Activated CD4-positive, alpha-beta T cell treated with anti-CD3 and anti-CD28 coated beads for 36 hours (primary cell): ENCODE measurements at regions of chr16 and their contacts with region 1.

Region 1: GRCh38 chr16:50152807-50153452 is at the start of gene TENT4B:
- DNase-seq: peak; percentile 92
- ATAC-seq: peak; percentile 71
- H3K4me3 Mint-ChIP-seq: peak within 1 kb of the TSS; percentile 79
- H3K27ac Mint-ChIP-seq: peak within 1 kb of the TSS; percentile 98
- H3K4me1 Mint-ChIP-seq: peaks cover 39% of the 10 kb centered on the region
- H3K27me3 Mint-ChIP-seq: no peaks in the 10 kb centered on the region
- total RNA-seq, gene TENT4B: 19.3 to 22.4 TPM

Region 2: GRCh38 chr16:50024684-50025536 is 128.0 kb before region 1 on chr16 and contains the start of gene CNEP1R1:
- CTCF ChIA-PET with region 1: interaction called, 13 read pairs
- POLR2A ChIA-PET with region 1: interaction called, 4 read pairs
- intact Hi-C with region 1: loop called (anchors 1 to 2 kb)
- DNase-seq: peak; percentile 95
- ATAC-seq: peak; percentile 97
- H3K4me3 Mint-ChIP-seq: peak within 1 kb of the TSS; percentile 96
- H3K27ac Mint-ChIP-seq: peak within 1 kb of the TSS; percentile 85
- H3K4me1 Mint-ChIP-seq: peaks cover 23% of the 10 kb centered on the region
- H3K27me3 Mint-ChIP-seq: no peaks in the 10 kb centered on the region
- total RNA-seq, gene CNEP1R1: 19.3 to 22.8 TPM

Region 3: DNA sequence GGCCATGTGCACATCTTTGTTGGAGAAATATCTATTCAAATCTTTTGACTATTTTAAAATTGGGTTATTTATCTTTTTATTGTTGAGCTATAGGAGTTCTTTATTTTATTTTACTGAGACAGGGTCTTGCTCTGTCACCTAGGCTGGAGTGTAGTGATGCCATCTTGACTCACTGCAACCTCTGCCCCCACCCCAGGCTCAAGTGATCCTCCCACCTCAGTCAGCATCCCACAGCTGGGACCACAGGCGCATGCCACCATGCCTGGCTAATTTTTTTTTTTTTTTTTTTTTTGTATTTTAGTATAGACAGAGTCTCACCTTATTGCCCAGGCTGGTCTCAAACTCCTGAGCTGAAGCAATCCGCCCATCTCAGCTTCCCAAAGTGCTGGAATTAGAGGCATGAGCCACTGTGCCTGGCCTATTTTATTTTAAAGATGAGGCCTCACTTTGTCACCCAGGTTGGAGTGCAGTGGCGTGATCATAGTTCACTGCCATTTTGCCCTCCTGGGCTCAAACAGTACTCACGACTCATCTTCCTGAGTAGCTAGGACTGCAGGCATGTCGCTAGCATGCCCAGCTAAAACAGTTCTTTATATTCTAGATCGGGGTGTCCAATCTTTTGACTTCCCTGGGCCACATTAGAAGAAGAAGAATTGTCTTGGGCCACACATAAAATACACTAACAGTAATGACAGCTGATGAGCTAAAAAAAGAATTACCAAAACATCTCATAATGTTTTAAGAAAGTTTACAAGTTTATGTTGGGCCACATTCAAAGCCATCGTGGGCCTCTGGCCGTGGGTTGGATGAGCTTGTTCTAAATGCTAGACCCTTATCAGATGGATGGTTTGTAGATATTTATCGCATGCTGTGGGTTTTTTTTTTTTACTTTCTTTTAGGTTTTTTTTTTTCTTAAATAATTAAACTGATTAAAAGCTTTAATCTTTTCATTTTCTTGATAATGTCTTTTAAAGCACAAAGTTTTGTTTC is 13.9 kb after region 1 on chr16:
- CTCF ChIA-PET with region 1: interaction called, 8 read pairs
- POLR2A ChIA-PET with region 1: no interaction called
- intact Hi-C with region 1: loop called (anchors 2 kb)
- DNase-seq: peak; percentile 62
- ATAC-seq: peak; percentile 89
- H3K4me3 Mint-ChIP-seq: peak overlapping the region; percentile 59
- H3K27ac Mint-ChIP-seq: peak overlapping the region; percentile 87
- H3K4me1 Mint-ChIP-seq: peaks cover 55% of the 10 kb centered on the region
- H3K27me3 Mint-ChIP-seq: no peaks in the 10 kb centered on the region

Region 4: GRCh38 chr16:50210266-50211038 is 57.5 kb after region 1 on chr16:
- CTCF ChIA-PET with region 1: interaction called, 10 read pairs
- POLR2A ChIA-PET with region 1: no interaction called
- intact Hi-C with region 1: loop called (anchors 1 to 5 kb)
- DNase-seq: peak; percentile 85
- ATAC-seq: peak; percentile 98
- H3K4me3 Mint-ChIP-seq: no peak overlapping the region
- H3K27ac Mint-ChIP-seq: peak overlapping the region; percentile 84
- H3K4me1 Mint-ChIP-seq: peaks cover 36% of the 10 kb centered on the region
- H3K27me3 Mint-ChIP-seq: no peaks in the 10 kb centered on the region

Region 5: DNA sequence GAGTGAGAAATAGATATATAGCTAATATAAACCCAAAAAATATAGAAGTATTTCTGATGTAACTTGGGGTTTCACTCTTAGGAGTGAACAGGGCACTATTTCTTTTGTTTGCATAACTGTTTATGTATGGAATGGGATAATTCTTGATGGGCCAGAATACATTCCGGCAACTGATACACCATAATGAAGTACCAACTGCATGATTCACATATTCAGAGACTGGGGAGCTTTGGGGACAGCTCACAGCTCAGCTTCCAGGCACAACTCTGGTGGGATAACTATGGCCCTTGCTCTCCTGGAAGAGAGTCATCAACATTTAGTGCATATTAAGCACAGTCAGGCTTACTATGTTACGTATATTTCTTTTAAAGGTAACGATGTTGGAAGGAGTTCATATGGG is 71.4 kb after region 1 on chr16:
- CTCF ChIA-PET with region 1: no interaction called
- POLR2A ChIA-PET with region 1: no interaction called
- intact Hi-C with region 1: no loop called
- DNase-seq: no peak
- ATAC-seq: no peak
- H3K4me3 Mint-ChIP-seq: no peak overlapping the region
- H3K27ac Mint-ChIP-seq: no peak overlapping the region
- H3K4me1 Mint-ChIP-seq: no peaks in the 10 kb centered on the region
- H3K27me3 Mint-ChIP-seq: no peaks in the 10 kb centered on the region

Region 6: DNA sequence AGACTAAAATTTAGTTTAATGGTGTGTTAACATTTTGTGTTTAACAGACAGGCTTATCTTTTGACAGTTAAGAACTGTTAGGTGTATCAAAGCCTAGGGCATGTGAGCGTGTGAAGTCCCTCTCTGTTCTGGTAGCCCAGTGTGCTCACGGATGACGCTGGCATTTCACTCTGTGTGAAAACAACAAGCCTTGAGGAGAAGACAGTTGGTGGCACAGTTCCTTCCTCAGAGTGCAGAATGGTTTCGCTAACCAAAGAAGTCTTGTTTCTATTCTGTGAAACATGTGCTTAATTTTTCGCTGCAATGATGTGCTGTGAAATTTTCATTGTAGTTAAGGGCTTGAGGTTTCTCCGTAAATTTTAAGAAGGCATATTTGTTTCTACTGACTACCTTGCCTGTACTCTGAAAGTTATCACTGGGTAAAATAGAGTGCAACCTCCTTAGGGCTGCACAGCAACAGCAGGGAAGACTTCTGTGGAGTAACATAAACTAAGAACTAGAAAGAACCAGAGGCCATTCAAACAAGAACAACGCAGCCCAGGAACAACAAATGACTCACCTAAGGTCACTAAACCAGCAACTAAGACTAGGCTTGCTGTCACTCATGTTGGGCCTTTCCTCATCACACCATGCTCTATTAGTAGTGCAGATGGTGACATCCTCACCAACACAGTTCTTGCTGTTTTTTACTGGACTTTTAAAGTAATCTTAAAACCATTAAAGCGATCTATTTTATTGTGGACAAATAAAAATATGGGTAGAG is 182.4 kb after region 1 on chr16:
- CTCF ChIA-PET with region 1: no interaction called
- POLR2A ChIA-PET with region 1: no interaction called
- intact Hi-C with region 1: loop called (anchors 1 to 5 kb)
- DNase-seq: peak; percentile 74
- ATAC-seq: peak; percentile 65
- H3K4me3 Mint-ChIP-seq: peak overlapping the region; percentile 41
- H3K27ac Mint-ChIP-seq: peak overlapping the region; percentile 94
- H3K4me1 Mint-ChIP-seq: peaks cover 73% of the 10 kb centered on the region
- H3K27me3 Mint-ChIP-seq: no peaks in the 10 kb centered on the region

Region 7: GRCh38 chr16:50681021-50681885 is 528.3 kb after region 1 on chr16 and contains the start of gene SNX20:
- CTCF ChIA-PET with region 1: no interaction called
- POLR2A ChIA-PET with region 1: no interaction called
- intact Hi-C with region 1: loop called in 1 of 2 experiments (anchors 5 kb)
- DNase-seq: peak; percentile 80
- ATAC-seq: peak; percentile 69
- H3K4me3 Mint-ChIP-seq: peak within 1 kb of the TSS; percentile 78
- H3K27ac Mint-ChIP-seq: peak within 1 kb of the TSS; percentile 94
- H3K4me1 Mint-ChIP-seq: peaks cover 85% of the 10 kb centered on the region
- H3K27me3 Mint-ChIP-seq: no peaks in the 10 kb centered on the region
- total RNA-seq, gene SNX20: 43.3 to 48.9 TPM